ENCODE measurements at regions of chr3 and their contacts with region 1.

Region 1: GRCh38 chr3:124761250-124761796 is 31.1 kb downstream of the UMPS start:
- DNase-seq: peak; percentile 88

Region 2: DNA sequence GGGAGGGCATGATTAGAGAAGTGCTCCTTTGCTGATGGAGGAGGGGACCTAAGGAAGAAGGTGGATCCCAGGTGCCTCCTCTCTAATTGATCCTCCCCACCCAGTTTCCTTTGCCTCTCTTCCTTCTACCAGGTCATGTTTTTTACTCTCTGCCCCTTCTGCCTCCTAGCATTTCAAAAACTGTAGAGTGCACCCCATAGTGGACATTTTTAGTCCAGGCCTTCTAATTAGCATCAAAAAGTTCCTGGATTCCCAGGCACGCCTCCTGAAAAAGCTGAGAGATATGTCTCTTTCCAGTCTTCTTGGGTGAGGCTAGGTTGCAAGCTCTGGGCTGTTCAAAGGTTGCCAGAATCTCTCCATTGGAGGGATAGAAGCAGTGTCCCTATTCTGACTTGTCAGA is 144.5 kb after region 1 on chr3:
- intact Hi-C with region 1: loop called (anchors 1 kb)
- DNase-seq: no peak

Region 3: DNA sequence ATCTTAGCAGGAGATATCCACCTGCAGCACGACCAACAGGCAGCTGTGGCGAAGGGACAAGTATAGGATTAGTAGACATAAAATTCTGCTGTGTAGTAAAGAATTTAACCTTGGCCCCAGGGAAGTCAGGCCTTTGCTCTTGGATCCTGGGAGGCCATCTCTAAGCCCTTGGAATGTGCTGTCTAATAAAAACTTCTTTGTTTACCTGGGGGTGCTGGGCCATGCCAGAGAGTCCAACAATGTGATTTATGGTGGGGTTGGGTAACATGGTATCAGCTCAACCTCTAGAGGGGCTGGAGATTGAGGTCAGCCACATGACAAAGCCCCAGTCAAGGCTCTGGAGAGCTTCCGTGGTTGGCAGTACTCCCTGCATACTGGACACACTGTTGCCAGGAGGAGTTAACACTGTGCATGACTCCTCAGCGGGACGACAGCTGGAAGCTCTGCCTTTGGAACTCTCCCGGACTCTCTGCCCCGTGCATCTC is 242.1 kb after region 1 on chr3:
- intact Hi-C with region 1: no loop called
- DNase-seq: no peak

Measured in cardiac septum (tissue), 1 donor.